Left ventricle myocardium inferior (tissue), 1 donor: ENCODE measurements at regions of chr19 and their contacts with region 1.

Region 1: GRCh38 chr19:34639491-34640085 is 37.4 kb downstream of the SCGB2B2 start:
- DNase-seq: no peak
- H3K4me3 ChIP-seq: no peak overlapping the region
- H3K27ac ChIP-seq: no peak overlapping the region
- H3K4me1 ChIP-seq: no peaks in the 10 kb centered on the region
- H3K27me3 ChIP-seq: no peaks in the 10 kb centered on the region
- CTCF ChIP-seq: peak; percentile 87

Region 2: DNA sequence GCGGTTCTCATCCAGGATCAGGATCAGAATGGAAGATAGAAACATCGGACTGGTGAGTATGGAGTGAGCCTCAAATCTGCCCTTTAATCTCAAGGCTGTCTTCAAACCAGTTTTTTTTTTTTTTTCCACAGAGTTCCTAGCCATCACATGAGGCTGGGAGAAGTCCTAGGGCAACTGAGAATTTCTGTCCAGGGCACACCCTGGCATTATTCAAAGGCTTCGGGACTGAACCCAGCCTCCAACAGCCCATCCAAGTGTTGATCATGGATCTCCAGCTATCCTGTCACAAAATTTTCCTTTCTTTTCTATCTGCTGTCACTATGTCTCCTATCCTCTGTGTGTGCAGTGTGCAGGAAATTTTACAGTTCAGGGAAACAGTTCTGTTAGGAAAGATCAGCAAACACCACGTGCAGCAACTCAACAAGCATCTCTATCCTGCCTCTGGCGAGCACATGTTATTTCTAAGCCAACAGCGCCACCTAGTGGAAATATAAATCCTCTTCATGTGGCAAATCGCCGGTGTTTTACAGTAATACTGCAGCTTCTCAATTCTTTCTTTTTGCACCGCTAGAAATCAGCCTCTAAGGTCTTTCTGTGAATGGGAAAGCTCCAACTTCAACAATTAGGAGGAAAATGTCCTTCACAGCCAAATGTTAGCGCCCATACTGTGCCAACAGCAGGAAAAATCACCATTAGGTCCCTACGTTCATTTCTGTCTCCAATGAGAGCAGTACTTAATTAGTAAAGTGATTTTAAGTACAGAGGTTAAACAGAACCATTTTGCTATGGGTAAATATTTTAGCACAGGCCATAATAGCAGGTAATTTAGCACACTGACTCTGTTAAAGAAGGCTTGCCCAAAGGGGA is 73.0 kb after region 1 on chr19:
- intact Hi-C with region 1: loop called (anchors 2 kb)
- DNase-seq: no peak
- H3K4me3 ChIP-seq: no peak overlapping the region
- H3K27ac ChIP-seq: no peak overlapping the region
- H3K4me1 ChIP-seq: no peaks in the 10 kb centered on the region
- H3K27me3 ChIP-seq: no peaks in the 10 kb centered on the region
- CTCF ChIP-seq: peak; percentile 85